IMR-90 (cell line): ENCODE measurements at regions of chr10 and their contacts with region 1.

Region 1: DNA sequence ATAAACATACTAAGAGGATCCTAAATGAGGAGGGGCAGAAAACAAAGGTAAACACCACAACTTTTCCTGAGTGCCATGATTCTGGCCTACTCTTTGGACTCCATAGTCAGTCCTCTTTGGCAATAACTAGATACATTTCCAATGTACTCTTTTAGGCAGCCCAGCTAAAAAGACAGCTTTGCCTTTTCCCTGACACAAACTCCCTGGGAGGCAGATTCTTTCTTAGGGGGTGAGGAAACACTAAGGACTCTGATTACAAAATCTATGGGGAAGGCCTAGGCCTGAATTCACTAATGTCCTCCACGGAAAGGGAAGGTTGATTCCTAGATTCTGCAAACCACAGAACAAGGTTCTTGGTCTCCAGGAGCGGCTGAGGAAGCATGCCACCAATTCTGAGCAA is 25.8 kb downstream of the FBXW4 start:
- DNase-seq: no peak
- ATAC-seq: no peak; the same call in 1 of the 2 replicates
- H3K4me3 ChIP-seq: no peak overlapping the region
- H3K27ac ChIP-seq: no peak overlapping the region
- H3K4me1 ChIP-seq: peaks cover 3% of the 10 kb centered on the region; the same call in 1 of the 2 replicates
- H3K27me3 ChIP-seq: no peaks in the 10 kb centered on the region
- CTCF ChIP-seq: no peak
- POLR2A ChIP-seq: no peak
- RAD21 ChIP-seq: no peak

Region 2: GRCh38 chr10:101782811-101783735 is 113.9 kb after region 1 on chr10 and contains the start of gene NPM3:
- CTCF ChIA-PET with region 1: no interaction called
- POLR2A ChIA-PET with region 1: no interaction called
- dilution Hi-C with region 1: no loop called
- in situ Hi-C with region 1: no loop called
- intact Hi-C with region 1: no loop called
- DNase-seq: peak; percentile 70
- ATAC-seq: peak; percentile 84
- H3K4me3 ChIP-seq: peak within 1 kb of the TSS; percentile 63
- H3K27ac ChIP-seq: peak within 1 kb of the TSS; percentile 51
- H3K4me1 ChIP-seq: peaks cover 11% of the 10 kb centered on the region
- H3K27me3 ChIP-seq: peaks cover 3% of the 10 kb centered on the region; the same call in 1 of the 2 replicates
- CTCF ChIP-seq: no peak
- POLR2A ChIP-seq: peak; percentile 59; the same call in 1 of the 2 replicates
- RAD21 ChIP-seq: no peak
- total RNA-seq, gene NPM3: 112 and 122 TPM in 2 replicates

Region 3: GRCh38 chr10:102090772-102091171 is 421.6 kb after region 1 on chr10:
- CTCF ChIA-PET with region 1: no interaction called
- POLR2A ChIA-PET with region 1: interaction called, 13 read pairs
- dilution Hi-C with region 1: no loop called
- in situ Hi-C with region 1: no loop called
- intact Hi-C with region 1: no loop called
- DNase-seq: peak; percentile 56
- ATAC-seq: peak; percentile 35; the same call in 1 of the 2 replicates
- H3K4me3 ChIP-seq: no peak overlapping the region
- H3K27ac ChIP-seq: no peak overlapping the region
- H3K4me1 ChIP-seq: no peaks in the 10 kb centered on the region
- H3K27me3 ChIP-seq: no peaks in the 10 kb centered on the region
- CTCF ChIP-seq: no peak
- POLR2A ChIP-seq: no peak
- RAD21 ChIP-seq: no peak